Activated CD8-positive, alpha-beta T cell treated with anti-CD3 and anti-CD28 coated beads for 36 hours (primary cell): ENCODE measurements at regions of chr5 and their contacts with region 1.

Region 1: GRCh38 chr5:173238312-173239232 is 3.6 kb upstream of the NKX2-5 start:
- DNase-seq: no peak
- ATAC-seq: no peak
- H3K4me3 Mint-ChIP-seq: peak overlapping the region; percentile 2
- H3K27ac Mint-ChIP-seq: no peak overlapping the region
- H3K4me1 Mint-ChIP-seq: peaks cover 28% of the 10 kb centered on the region
- H3K27me3 Mint-ChIP-seq: peaks cover 92% of the 10 kb centered on the region
- CTCF ChIP-seq: no peak

Region 2: DNA sequence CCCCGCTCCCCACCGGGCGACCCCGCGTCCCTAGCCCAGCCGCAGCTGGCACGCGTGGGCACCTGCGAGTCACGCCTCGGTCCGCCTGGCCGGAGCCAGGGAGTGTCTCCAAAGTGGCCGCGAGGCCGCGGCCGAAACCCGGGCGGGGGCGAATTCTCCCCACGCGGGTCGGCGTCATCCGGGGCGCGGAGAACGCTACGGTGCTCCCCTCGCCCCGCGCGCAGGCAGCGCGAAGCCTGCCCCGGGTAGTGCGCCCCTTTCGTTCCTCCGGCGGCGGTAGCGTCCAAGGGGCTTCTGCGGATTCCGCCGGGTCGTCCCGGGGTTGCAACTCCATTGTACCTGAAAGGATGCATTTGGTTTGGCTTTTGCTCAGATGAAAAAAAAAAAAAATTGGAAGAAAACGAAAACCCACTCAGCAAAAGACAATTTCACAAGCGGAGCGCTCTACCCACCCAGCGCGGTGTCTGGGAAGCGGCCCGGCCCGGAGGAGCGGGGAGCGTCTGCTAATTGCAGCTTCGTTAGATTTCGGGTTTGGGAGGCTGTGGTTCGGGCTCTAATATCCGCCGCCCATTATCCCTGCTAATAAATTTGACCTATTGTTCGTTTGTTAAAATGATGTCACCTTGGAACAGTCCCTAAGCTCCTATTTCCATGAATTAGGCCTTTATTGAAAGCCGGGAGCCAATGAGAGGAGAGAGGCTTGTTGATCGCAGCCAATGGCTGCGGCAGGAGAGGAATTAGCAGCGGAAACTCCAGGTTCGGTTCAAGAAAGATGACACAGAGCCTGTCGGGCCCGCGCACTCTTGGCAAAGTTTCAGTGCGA is 1929.9 kb before region 1 on chr5 and contains the start of gene TLX3:
- CTCF ChIA-PET with region 1: no interaction called
- POLR2A ChIA-PET with region 1: no interaction called
- intact Hi-C with region 1: loop called (anchors 10 kb)
- DNase-seq: no peak
- ATAC-seq: no peak
- H3K4me3 Mint-ChIP-seq: no peak within 1 kb of the TSS
- H3K27ac Mint-ChIP-seq: no peak within 1 kb of the TSS
- H3K4me1 Mint-ChIP-seq: peaks cover 16% of the 10 kb centered on the region
- H3K27me3 Mint-ChIP-seq: peaks cover 71% of the 10 kb centered on the region
- CTCF ChIP-seq: no peak
- total RNA-seq, gene TLX3: not detected

Region 3: GRCh38 chr5:173310861-173311785 is 72.6 kb after region 1 on chr5:
- CTCF ChIA-PET with region 1: no interaction called
- POLR2A ChIA-PET with region 1: no interaction called
- intact Hi-C with region 1: no loop called
- DNase-seq: no peak
- ATAC-seq: no peak
- H3K4me3 Mint-ChIP-seq: no peak overlapping the region
- H3K27ac Mint-ChIP-seq: no peak overlapping the region
- H3K4me1 Mint-ChIP-seq: no peaks in the 10 kb centered on the region
- H3K27me3 Mint-ChIP-seq: peaks cover 24% of the 10 kb centered on the region
- CTCF ChIP-seq: no peak

Region 4: DNA sequence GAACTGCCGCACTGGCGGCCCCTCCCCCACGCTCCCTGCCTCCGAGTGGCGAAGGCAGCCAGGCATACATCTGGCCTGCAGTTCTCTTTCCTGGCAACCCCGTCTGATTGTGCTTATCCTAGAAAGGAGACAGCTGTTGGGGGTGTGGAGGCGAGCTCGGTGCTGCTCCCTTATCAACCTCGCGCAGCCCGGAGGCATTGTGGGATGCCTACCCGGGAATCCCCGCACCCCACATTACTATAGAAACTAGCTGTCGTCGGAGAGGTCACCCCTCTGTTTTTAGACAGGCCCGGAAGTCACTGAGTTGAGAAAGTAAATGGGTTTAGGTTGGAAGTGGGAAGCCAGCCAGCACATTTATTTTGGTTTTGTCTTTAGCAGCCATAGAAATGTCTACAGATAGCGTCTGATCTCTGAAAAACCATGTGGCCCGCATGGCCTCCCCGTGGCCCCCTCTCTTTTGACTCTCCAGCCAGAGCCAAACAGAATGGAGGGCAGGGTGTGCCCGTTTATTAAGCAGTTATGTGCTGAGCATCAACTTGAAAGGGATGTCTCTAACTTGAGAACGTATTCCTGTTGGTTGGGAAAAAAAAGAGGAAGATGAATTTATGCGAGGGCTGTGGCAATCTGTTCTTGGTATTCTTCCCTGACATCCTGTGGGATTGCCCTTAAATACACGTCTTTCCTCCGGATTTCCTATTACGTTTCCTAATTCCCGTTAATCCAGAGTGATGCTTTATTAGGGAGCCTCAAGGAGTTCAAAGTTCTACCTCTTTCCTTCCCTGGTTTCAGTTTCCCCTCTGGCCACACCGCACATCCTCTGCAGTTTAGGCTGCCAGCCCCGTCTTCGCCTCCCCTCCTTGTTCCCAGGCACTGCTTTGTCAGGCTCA is 85.8 kb after region 1 on chr5:
- CTCF ChIA-PET with region 1: no interaction called
- POLR2A ChIA-PET with region 1: no interaction called
- intact Hi-C with region 1: loop called (anchors 5 kb)
- DNase-seq: peak; percentile 23
- ATAC-seq: no peak
- H3K4me3 Mint-ChIP-seq: peak overlapping the region; percentile 98
- H3K27ac Mint-ChIP-seq: no peak overlapping the region
- H3K4me1 Mint-ChIP-seq: peaks cover 30% of the 10 kb centered on the region
- H3K27me3 Mint-ChIP-seq: peaks cover 50% of the 10 kb centered on the region
- CTCF ChIP-seq: no peak

Region 5: GRCh38 chr5:173456751-173457171 is 218.2 kb after region 1 on chr5:
- CTCF ChIA-PET with region 1: no interaction called
- POLR2A ChIA-PET with region 1: no interaction called
- intact Hi-C with region 1: no loop called
- DNase-seq: peak; percentile 7
- ATAC-seq: no peak
- H3K4me3 Mint-ChIP-seq: no peak overlapping the region
- H3K27ac Mint-ChIP-seq: no peak overlapping the region
- H3K4me1 Mint-ChIP-seq: no peaks in the 10 kb centered on the region
- H3K27me3 Mint-ChIP-seq: peaks cover 3% of the 10 kb centered on the region
- CTCF ChIP-seq: no peak

Region 6: DNA sequence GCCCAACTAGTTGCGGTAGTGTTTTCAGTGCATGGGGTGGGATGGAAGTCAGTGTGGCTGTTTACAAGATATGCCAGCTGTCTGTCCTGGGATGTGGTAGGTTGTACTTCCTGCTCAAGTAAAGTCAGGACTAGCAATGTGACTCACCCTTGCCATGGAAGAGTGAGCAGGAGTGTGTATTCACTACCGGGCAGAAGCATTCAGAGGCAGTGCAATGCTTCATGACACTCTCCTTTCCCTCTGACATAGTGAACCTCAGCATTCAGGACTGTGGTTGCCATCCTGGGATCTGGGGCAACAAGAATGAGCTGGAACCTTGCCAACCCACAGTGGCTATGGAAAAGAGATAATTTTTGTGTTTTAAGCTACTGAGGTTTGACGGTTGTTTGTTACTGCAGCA is 309.0 kb after region 1 on chr5:
- CTCF ChIA-PET with region 1: no interaction called
- POLR2A ChIA-PET with region 1: no interaction called
- intact Hi-C with region 1: no loop called
- DNase-seq: no peak
- ATAC-seq: no peak
- H3K4me3 Mint-ChIP-seq: no peak overlapping the region
- H3K27ac Mint-ChIP-seq: no peak overlapping the region
- H3K4me1 Mint-ChIP-seq: no peaks in the 10 kb centered on the region
- H3K27me3 Mint-ChIP-seq: peaks cover 6% of the 10 kb centered on the region
- CTCF ChIP-seq: no peak